ENCODE measurements at regions of chr12 and their contacts with region 1.

Region 1: GRCh38 chr12:54259194-54260011 is 20.5 kb downstream of the CBX5 start:
- DNase-seq: no peak
- H3K4me3 ChIP-seq: peak overlapping the region; percentile 20
- H3K27me3 ChIP-seq: no peaks in the 10 kb centered on the region
- CTCF ChIP-seq: no peak

Region 2: DNA sequence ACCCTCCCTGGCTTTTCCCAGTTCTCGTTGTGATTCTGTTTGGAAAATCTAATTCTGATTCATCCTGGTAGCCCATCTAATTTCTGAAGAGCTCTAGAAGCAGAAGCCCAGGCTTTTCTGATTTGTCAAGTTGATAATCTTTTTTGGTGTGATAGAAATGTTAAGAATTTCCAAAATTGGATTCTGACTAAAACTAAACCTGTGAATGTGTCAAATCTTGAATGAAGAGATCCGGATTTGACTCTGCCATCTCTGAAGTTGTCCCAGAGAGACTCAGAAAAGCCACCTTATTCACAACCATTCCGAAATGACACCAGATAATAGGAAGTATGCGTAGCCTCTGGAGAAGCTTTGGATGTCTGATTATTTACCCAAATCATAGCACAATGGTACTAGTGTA is 494.8 kb before region 1 on chr12:
- CTCF ChIA-PET with region 1: no interaction called
- POLR2A ChIA-PET with region 1: no interaction called
- DNase-seq: no peak
- H3K4me3 ChIP-seq: no peak overlapping the region
- H3K27me3 ChIP-seq: peaks cover 4% of the 10 kb centered on the region
- CTCF ChIP-seq: no peak

Region 3: GRCh38 chr12:54279866-54280467 is 20.6 kb after region 1 on chr12 and contains the start of gene CBX5:
- CTCF ChIA-PET with region 1: interaction called, 3 read pairs
- POLR2A ChIA-PET with region 1: interaction called, 15 read pairs
- DNase-seq: peak; percentile 93
- H3K4me3 ChIP-seq: peak within 1 kb of the TSS; percentile 94
- H3K27me3 ChIP-seq: no peaks in the 10 kb centered on the region
- CTCF ChIP-seq: no peak
- polyA plus RNA-seq, gene CBX5: 14.3 and 33.2 TPM in 2 replicates